Tibial artery (tissue), 4 donors: ENCODE measurements at regions of chr4 and their contacts with region 1.

Region 1: GRCh38 chr4:187414716-187415115 is 580.9 kb upstream of the ZFP42 start:
- DNase-seq: no peak
- H3K4me3 ChIP-seq: no peak overlapping the region
- H3K27ac ChIP-seq: peak overlapping the region in 1 of 2 donors; percentile 5
- H3K4me1 ChIP-seq: peaks cover 0 to 12% (median 9%) of the 10 kb centered on the region in 4 donors
- H3K27me3 ChIP-seq: no peaks in the 10 kb centered on the region
- CTCF ChIP-seq: no peak

Region 2: GRCh38 chr4:186651624-186652023 is 763.1 kb before region 1 on chr4:
- intact Hi-C with region 1: no loop called
- DNase-seq: peak; percentile 59 to 84
- H3K4me3 ChIP-seq: peak overlapping the region; percentile 46 to 60
- H3K27ac ChIP-seq: peak overlapping the region; percentile 22 to 43
- H3K4me1 ChIP-seq: peaks cover 0 to 24% (median 4%) of the 10 kb centered on the region in 4 donors
- H3K27me3 ChIP-seq: no peaks in the 10 kb centered on the region
- CTCF ChIP-seq: no peak

Region 3: GRCh38 chr4:187046471-187046870 is 368.2 kb before region 1 on chr4:
- intact Hi-C with region 1: no loop called
- DNase-seq: no peak
- H3K4me3 ChIP-seq: no peak overlapping the region
- H3K27ac ChIP-seq: no peak overlapping the region
- H3K4me1 ChIP-seq: peaks cover 0 to 8% (median 3%) of the 10 kb centered on the region in 4 donors
- H3K27me3 ChIP-seq: no peaks in the 10 kb centered on the region
- CTCF ChIP-seq: no peak

Region 4: DNA sequence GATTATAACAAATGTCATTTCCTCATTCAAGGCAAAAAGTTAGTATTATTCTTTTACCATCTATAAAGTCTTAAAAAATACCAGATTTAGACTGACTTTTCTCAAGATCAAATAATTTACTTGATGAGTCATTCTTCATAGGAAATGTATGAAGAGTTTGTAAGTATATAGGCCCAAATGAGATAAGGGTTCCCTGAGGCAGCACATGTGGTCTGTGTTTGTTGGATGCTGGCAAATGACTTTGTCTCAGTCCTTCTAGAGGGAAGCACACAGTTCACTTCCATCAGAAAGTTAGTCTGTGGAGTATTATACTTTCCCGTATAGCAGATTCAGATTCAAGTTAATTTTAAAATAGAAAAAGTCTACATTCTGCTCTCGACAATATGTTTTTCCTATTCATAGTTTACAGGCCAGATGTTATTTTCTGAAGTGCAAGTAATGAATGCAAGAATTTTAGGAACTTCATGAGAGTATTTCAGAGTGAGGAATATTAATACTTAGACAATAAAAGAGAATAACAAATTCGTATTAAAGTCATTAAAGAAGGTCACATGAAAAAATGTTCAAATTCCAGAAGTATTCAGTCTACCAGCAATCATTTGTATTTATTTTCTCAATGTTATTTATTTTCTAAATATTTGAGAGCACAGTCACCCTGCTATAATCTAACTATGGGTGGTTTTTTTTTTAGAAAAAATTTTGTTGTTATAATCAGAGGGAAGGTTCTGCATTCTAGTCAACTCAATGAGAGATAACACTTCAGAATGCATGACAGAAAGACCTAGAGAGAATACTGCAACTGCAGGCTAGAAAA is 21.0 kb before region 1 on chr4:
- intact Hi-C with region 1: loop called (anchors 2 kb)
- DNase-seq: no peak
- H3K4me3 ChIP-seq: no peak overlapping the region
- H3K27ac ChIP-seq: no peak overlapping the region
- H3K4me1 ChIP-seq: peaks cover 0 to 7% (median 2%) of the 10 kb centered on the region in 4 donors
- H3K27me3 ChIP-seq: no peaks in the 10 kb centered on the region
- CTCF ChIP-seq: no peak